ENCODE measurements at regions of chr12 and their contacts with region 1.

Region 1: GRCh38 chr12:66321435-66321834 is 19.1 kb downstream of the HELB start:
- DNase-seq: peak; percentile 17
- ATAC-seq: no peak; the same call in 1 of the 2 replicates
- H3K4me3 ChIP-seq: no peak overlapping the region
- H3K27ac ChIP-seq: no peak overlapping the region
- H3K4me1 ChIP-seq: no peaks in the 10 kb centered on the region
- H3K27me3 ChIP-seq: no peaks in the 10 kb centered on the region
- CTCF ChIP-seq: no peak
- POLR2A ChIP-seq: no peak
- RAD21 ChIP-seq: no peak

Region 2: GRCh38 chr12:66247741-66248140 is 73.7 kb before region 1 on chr12:
- CTCF ChIA-PET with region 1: no interaction called
- POLR2A ChIA-PET with region 1: no interaction called
- dilution Hi-C with region 1: no loop called
- in situ Hi-C with region 1: no loop called
- intact Hi-C with region 1: no loop called
- DNase-seq: no peak
- ATAC-seq: no peak
- H3K4me3 ChIP-seq: no peak overlapping the region
- H3K27ac ChIP-seq: no peak overlapping the region
- H3K4me1 ChIP-seq: no peaks in the 10 kb centered on the region
- H3K27me3 ChIP-seq: no peaks in the 10 kb centered on the region; the same call in 1 of the 2 replicates
- CTCF ChIP-seq: no peak
- POLR2A ChIP-seq: no peak
- RAD21 ChIP-seq: no peak

Region 3: GRCh38 chr12:67019070-67019469 is 697.6 kb after region 1 on chr12:
- CTCF ChIA-PET with region 1: no interaction called
- POLR2A ChIA-PET with region 1: no interaction called
- dilution Hi-C with region 1: no loop called
- in situ Hi-C with region 1: no loop called
- intact Hi-C with region 1: loop called (anchors 10 kb)
- DNase-seq: no peak
- ATAC-seq: no peak
- H3K4me3 ChIP-seq: no peak overlapping the region
- H3K27ac ChIP-seq: no peak overlapping the region
- H3K4me1 ChIP-seq: no peaks in the 10 kb centered on the region
- H3K27me3 ChIP-seq: no peaks in the 10 kb centered on the region
- CTCF ChIP-seq: no peak
- POLR2A ChIP-seq: no peak
- RAD21 ChIP-seq: no peak